HCT116 (cell line): ENCODE measurements at regions of chr3 and their contacts with region 1.

Region 1: DNA sequence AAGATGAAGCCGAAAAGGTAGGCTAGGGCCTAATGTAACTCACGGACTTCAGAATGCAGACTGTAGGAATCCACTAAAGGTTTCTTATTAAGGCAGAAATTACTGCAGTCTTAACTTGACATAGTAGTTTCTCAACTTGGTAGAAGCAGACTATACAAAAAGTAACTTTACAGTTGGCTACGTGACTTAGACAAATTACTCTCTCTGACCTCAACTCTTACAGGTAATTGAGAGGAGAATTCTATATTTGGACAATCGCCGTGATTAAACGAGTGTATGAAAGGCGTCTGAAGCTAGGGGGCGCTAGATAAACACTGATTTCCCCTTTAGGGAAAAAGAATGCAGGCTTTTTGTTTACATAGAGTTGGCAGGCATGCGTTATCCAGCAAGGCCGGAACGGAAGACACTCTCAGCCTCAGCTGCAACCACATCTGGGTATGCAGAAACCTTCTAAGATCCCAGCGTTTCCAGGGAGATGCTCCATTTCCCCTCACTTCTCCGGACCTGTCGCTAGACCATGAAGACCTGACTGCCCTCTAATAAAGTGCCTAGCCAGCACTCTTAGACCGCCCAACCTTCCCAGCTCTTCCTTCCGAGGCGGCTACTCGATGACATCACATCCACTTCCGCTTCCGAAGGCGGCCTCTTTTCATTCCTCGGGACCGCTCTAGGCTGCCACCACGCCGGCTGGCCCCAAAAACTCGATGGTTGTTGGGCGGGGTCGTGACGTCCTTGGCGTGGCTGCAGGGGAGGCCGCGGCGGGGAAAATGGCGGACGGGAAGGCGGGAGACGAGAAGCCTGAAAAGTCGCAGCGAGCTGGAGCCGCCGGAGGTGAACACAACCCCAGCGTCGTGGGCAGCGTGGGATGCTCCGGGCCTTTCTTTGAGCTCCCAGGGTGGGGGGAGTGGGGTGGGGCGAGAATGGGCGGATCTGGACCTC is at the start of gene PCNP:
- DNase-seq: peak; percentile 99
- ATAC-seq: peak; percentile 90
- H3K4me3 ChIP-seq: peak within 1 kb of the TSS; percentile 81 to 95
- H3K27ac ChIP-seq: peak within 1 kb of the TSS; percentile 91
- H3K4me1 ChIP-seq: peaks cover 11 to 24% of the 10 kb centered on the region in 2 experiments
- H3K27me3 ChIP-seq: no peaks in the 10 kb centered on the region
- CTCF ChIP-seq: peak; percentile 76 to 90 (median 77)
- POLR2A ChIP-seq: peak; percentile 69
- RAD21 ChIP-seq: peak; percentile 76
- total RNA-seq, gene PCNP: 177 TPM

Region 2: DNA sequence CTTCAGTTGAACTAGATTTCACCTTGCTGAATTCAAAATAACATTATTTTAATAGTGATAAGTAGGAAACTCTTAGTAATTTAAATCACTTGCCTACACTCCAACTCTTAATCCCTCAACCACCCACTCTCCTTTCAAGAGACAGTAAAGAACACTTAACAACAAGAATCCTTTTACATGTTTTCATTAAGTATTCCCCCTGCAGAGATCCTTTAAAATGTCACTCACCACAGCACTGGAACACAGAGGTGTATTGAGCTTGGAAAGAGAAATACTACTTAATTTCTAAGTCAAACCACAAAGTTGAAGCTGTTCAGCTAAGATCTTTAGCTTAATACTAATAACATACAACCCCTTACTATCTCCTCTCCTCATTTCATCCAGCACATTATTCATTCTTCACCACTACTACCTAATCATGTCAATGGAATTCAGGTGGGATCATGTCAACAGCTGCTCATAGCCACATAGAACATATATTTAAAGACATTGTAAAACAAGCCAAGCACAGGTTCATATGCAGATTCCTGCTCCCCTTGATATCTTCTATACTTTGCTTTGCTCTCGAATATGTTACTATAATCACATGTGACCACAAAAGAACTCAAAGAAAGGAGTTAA is 293.8 kb before region 1 on chr3:
- CTCF ChIA-PET with region 1: no interaction called
- POLR2A ChIA-PET with region 1: no interaction called
- RAD21 ChIA-PET with region 1: no interaction called
- intact Hi-C with region 1: no loop called
- DNase-seq: no peak
- ATAC-seq: no peak
- H3K4me3 ChIP-seq: no peak overlapping the region
- H3K27ac ChIP-seq: no peak overlapping the region
- H3K4me1 ChIP-seq: no peaks in the 10 kb centered on the region
- H3K27me3 ChIP-seq: no peaks in the 10 kb centered on the region
- CTCF ChIP-seq: no peak
- POLR2A ChIP-seq: no peak
- RAD21 ChIP-seq: no peak

Region 3: GRCh38 chr3:101561630-101562328 is 11.9 kb before region 1 on chr3 and contains the start of gene TRMT10C:
- CTCF ChIA-PET with region 1: interaction called, 9 read pairs
- POLR2A ChIA-PET with region 1: interaction called, 11 read pairs
- RAD21 ChIA-PET with region 1: no interaction called
- intact Hi-C with region 1: no loop called
- DNase-seq: peak; percentile 86
- ATAC-seq: peak; percentile 96
- H3K4me3 ChIP-seq: peak within 1 kb of the TSS; percentile 73
- H3K27ac ChIP-seq: peak within 1 kb of the TSS; percentile 77
- H3K4me1 ChIP-seq: peaks cover 6 to 17% of the 10 kb centered on the region in 2 experiments; a peak in 3 of 4 replicates
- H3K27me3 ChIP-seq: peaks cover 13% of the 10 kb centered on the region; the same call in 1 of the 2 replicates
- CTCF ChIP-seq: no peak
- POLR2A ChIP-seq: peak; percentile 92
- RAD21 ChIP-seq: no peak
- total RNA-seq, gene TRMT10C: 36.4 TPM

Region 4: DNA sequence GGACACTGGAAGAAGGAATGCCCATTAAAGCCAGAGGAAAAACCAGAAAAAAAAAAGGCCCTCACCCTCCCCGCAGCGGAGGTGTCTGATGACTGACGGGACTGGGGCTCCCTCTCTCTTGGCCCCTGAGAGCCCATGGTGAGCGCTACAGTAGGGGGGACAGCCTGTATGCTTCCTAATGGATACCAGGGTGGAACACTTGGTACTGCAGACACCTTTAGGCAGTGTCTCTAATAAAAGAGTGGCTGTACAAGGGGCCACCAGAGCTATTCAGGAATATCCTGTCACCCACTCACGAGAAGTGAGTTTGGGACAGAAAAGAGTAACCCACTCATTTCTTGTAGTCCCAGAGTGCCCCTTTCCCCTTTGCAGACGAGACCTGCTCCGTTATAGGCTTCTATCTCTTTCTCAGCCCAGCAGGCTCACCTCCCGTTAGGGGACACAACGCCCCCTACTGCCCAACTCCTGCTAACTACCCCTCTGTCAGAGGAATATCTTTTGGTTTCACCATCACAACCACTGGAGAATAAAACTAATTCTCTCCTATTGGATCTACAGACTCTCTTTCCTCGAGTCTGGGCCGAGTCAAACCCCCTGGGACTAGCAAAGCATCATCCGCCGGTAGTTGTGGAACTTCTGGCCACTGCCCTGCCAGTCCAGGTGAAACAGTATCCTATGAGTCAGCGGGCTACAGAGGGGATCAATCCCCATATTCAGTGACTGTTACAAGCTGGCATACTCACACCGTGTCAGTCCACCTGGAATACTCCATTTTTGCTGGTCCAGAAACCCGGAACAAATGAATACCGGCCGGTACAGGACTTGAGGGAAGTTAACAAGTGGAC is 62.5 kb after region 1 on chr3:
- CTCF ChIA-PET with region 1: no interaction called
- POLR2A ChIA-PET with region 1: no interaction called
- RAD21 ChIA-PET with region 1: no interaction called
- intact Hi-C with region 1: loop called (anchors 1 kb)
- DNase-seq: peak; percentile 27
- ATAC-seq: peak; percentile 94
- H3K4me3 ChIP-seq: no peak overlapping the region
- H3K27ac ChIP-seq: no peak overlapping the region
- H3K4me1 ChIP-seq: 0 out of 4 replicates have a peak, but pooled peaks cover 0 to 3% of the 10 kb centered on the region in 2 experiments
- H3K27me3 ChIP-seq: no peaks in the 10 kb centered on the region
- CTCF ChIP-seq: peak; percentile 40 to 80 (median 78); a peak in 5 of 6 replicates
- POLR2A ChIP-seq: no peak
- RAD21 ChIP-seq: peak; percentile 66

Region 5: GRCh38 chr3:101676765-101677435 is 103.2 kb after region 1 on chr3 and contains the start of gene ZBTB11:
- CTCF ChIA-PET with region 1: interaction called, 8 read pairs
- POLR2A ChIA-PET with region 1: interaction called, 6 read pairs
- RAD21 ChIA-PET with region 1: interaction called in 1 of 2 experiments, 4 read pairs
- intact Hi-C with region 1: loop called (anchors 1 kb)
- DNase-seq: peak; percentile 100
- ATAC-seq: peak; percentile 77
- H3K4me3 ChIP-seq: peak within 1 kb of the TSS; percentile 97
- H3K27ac ChIP-seq: peak within 1 kb of the TSS; percentile 78
- H3K4me1 ChIP-seq: peaks cover 7 to 23% of the 10 kb centered on the region in 2 experiments; a peak in 3 of 4 replicates
- H3K27me3 ChIP-seq: no peaks in the 10 kb centered on the region
- CTCF ChIP-seq: peak; percentile 26 to 61 (median 51); a peak in 5 of 6 replicates
- POLR2A ChIP-seq: no peak
- RAD21 ChIP-seq: peak; percentile 47; the same call in 1 of the 2 replicates
- total RNA-seq, gene ZBTB11: 20.4 TPM